CD14-positive monocyte (primary cell): ENCODE measurements at regions of chr4 and their contacts with region 1.

Region 1: DNA sequence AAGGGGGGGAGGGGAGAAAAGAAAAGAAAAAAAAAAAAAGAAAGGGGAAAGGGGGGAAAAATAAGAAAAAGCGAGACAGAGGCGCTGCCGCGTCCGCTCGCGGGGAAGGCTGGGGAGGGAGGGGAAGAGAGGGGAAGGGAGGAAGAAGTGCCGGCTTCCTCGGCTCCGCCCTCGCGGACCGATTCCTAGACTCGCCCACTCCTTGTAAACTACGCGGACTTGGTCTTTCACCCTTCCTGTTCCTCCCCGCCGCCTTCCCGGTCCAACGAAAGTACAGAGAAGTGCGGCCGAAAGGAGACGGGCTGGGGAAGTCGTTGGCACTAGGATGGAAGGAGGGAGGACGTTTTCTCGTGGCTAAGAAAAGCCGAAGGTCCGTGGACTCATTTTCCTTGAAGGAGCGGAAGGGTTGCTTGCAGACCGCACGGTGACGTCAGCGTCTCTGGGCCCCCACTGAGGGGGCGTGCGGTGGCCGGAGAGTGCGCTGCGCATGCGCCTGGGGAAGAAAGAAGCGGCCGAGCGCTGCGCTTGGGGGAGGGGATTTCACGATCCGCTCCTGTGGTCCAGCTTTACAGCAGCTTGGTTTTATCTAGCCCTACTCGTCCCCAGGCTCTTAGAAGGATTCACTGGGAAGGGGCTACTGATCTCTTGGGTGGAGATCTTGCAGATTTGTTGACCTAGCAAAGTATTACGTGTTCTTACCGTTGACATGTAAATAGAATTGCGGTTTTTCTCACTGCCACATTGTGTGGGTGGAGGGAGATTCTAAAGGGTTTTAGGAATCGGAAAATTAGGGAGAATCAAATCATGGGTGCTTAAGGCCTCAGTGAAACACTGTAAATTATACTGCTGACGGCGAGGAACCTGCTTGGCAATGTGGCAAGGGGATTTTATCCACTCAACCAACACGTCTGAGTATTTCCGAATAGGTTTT is at the start of gene CCNI:
- DNase-seq: peak; percentile 94 to 97 (median 97)
- H3K4me3 ChIP-seq: peak within 1 kb of the TSS; percentile 81 to 96 (median 84)
- H3K4me3 Mint-ChIP-seq: peak within 1 kb of the TSS in 1 of 2 donors; percentile 87
- H3K27ac ChIP-seq: peak within 1 kb of the TSS; percentile 97 to 99
- H3K27ac Mint-ChIP-seq: peak within 1 kb of the TSS in 6 of 7 donors; percentile 100
- H3K4me1 ChIP-seq: peaks cover 35 to 46% of the 10 kb centered on the region in 2 donors
- H3K4me1 Mint-ChIP-seq: peaks cover 33% of the 10 kb centered on the region
- H3K27me3 ChIP-seq: no peaks in the 10 kb centered on the region
- H3K27me3 Mint-ChIP-seq: no peaks in the 10 kb centered on the region
- CTCF ChIP-seq: no peak
- polyA plus RNA-seq, gene CCNI: 106 to 264 (median 171) TPM

Region 2: DNA sequence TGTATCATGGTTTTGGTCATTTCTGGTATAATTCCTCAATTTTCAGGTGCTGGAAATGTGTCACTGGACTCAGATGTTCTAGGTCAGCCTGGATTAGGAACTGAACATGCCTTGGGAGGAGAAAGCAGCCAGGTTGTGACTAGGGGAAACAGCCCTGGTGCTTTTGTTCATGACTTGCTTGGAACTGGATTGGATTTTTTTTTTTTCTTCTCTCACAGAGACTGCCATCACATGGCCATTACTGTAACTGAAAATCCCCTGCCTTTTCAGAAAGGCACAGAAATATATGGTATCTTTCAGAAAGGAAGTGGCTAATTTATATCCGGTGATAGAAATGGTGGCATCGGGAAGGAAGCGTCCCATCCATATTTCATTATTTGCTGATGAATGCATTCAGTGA is 92.0 kb before region 1 on chr4:
- intact Hi-C with region 1: no loop called
- DNase-seq: no peak
- H3K4me3 ChIP-seq: no peak overlapping the region
- H3K4me3 Mint-ChIP-seq: no peak overlapping the region
- H3K27ac ChIP-seq: no peak overlapping the region
- H3K27ac Mint-ChIP-seq: peak overlapping the region in 1 of 7 donors; percentile 27
- H3K4me1 ChIP-seq: peaks cover 0 to 6% of the 10 kb centered on the region in 2 donors
- H3K4me1 Mint-ChIP-seq: peaks cover 18% of the 10 kb centered on the region
- H3K27me3 ChIP-seq: no peaks in the 10 kb centered on the region
- H3K27me3 Mint-ChIP-seq: peaks cover 0 to 4% (median 0%) of the 10 kb centered on the region in 3 donors
- CTCF ChIP-seq: no peak

Region 3: GRCh38 chr4:77044461-77045150 is 31.5 kb before region 1 on chr4:
- intact Hi-C with region 1: no loop called
- DNase-seq: peak in 1 of 3 donors; percentile 5
- H3K4me3 ChIP-seq: no peak overlapping the region
- H3K4me3 Mint-ChIP-seq: no peak overlapping the region
- H3K27ac ChIP-seq: peak overlapping the region in 1 of 2 donors; percentile 22
- H3K27ac Mint-ChIP-seq: peak overlapping the region in 3 of 7 donors; percentile 6 to 68 (median 33)
- H3K4me1 ChIP-seq: peaks cover 18 to 21% of the 10 kb centered on the region in 2 donors
- H3K4me1 Mint-ChIP-seq: peaks cover 19% of the 10 kb centered on the region
- H3K27me3 ChIP-seq: no peaks in the 10 kb centered on the region
- H3K27me3 Mint-ChIP-seq: peaks cover 0 to 2% (median 0%) of the 10 kb centered on the region in 3 donors
- CTCF ChIP-seq: peak; percentile 66

Region 4: GRCh38 chr4:77193511-77194102 is 117.5 kb after region 1 on chr4:
- intact Hi-C with region 1: loop called in 1 of 2 experiments (anchors 5 kb)
- DNase-seq: peak; percentile 62 to 81 (median 75)
- H3K4me3 ChIP-seq: peak overlapping the region; percentile 59 to 79 (median 78)
- H3K4me3 Mint-ChIP-seq: peak overlapping the region; percentile 99
- H3K27ac ChIP-seq: peak overlapping the region; percentile 79 to 80
- H3K27ac Mint-ChIP-seq: peak overlapping the region; percentile 94 to 99 (median 98)
- H3K4me1 ChIP-seq: peaks cover 20% of the 10 kb centered on the region in 2 donors
- H3K4me1 Mint-ChIP-seq: peaks cover 31% of the 10 kb centered on the region
- H3K27me3 ChIP-seq: no peaks in the 10 kb centered on the region
- H3K27me3 Mint-ChIP-seq: peaks cover 0 to 3% (median 2%) of the 10 kb centered on the region in 3 donors
- CTCF ChIP-seq: no peak